ENCODE measurements at regions of chr17 and their contacts with region 1.

Region 1: GRCh38 chr17:4967539-4968165 is at the start of gene SPAG7:
- DNase-seq: peak; percentile 88 to 98 (median 93)
- ATAC-seq: peak; percentile 71
- H3K4me3 ChIP-seq: peak within 1 kb of the TSS; percentile 84
- H3K4me3 Mint-ChIP-seq: no peak within 1 kb of the TSS
- H3K27ac ChIP-seq: peak within 1 kb of the TSS; percentile 87
- H3K27ac Mint-ChIP-seq: peak within 1 kb of the TSS; percentile 69
- H3K4me1 ChIP-seq: peaks cover 38% of the 10 kb centered on the region
- H3K4me1 Mint-ChIP-seq: peaks cover 13% of the 10 kb centered on the region
- H3K27me3 ChIP-seq: no peaks in the 10 kb centered on the region
- H3K27me3 Mint-ChIP-seq: no peaks in the 10 kb centered on the region
- CTCF ChIP-seq: peak; percentile 15
- total RNA-seq, gene SPAG7: 30.2 to 30.9 TPM

Region 2: GRCh38 chr17:4789901-4790704 is 177.5 kb before region 1 on chr17:
- CTCF ChIA-PET with region 1: interaction called, 4 read pairs
- POLR2A ChIA-PET with region 1: interaction called, 5 read pairs
- intact Hi-C with region 1: loop called in 1 of 2 experiments (anchors 10 kb)
- DNase-seq: peak; percentile 61 to 92 (median 74)
- ATAC-seq: peak; percentile 85
- H3K4me3 ChIP-seq: peak overlapping the region; percentile 65
- H3K4me3 Mint-ChIP-seq: peak overlapping the region; percentile 91
- H3K27ac ChIP-seq: peak overlapping the region; percentile 58 to 74
- H3K27ac Mint-ChIP-seq: peak overlapping the region; percentile 74
- H3K4me1 ChIP-seq: peaks cover 36% of the 10 kb centered on the region
- H3K4me1 Mint-ChIP-seq: peaks cover 24% of the 10 kb centered on the region
- H3K27me3 ChIP-seq: peaks cover 29% of the 10 kb centered on the region in 2 experiments
- H3K27me3 Mint-ChIP-seq: peaks cover 45% of the 10 kb centered on the region
- CTCF ChIP-seq: peak; percentile 81

Region 3: GRCh38 chr17:4908301-4908700 is 59.4 kb before region 1 on chr17:
- CTCF ChIA-PET with region 1: interaction called, 21 read pairs
- POLR2A ChIA-PET with region 1: interaction called, 54 read pairs
- intact Hi-C with region 1: loop called (anchors 1 kb)
- DNase-seq: peak in 2 of 14 experiments; percentile 30 to 51
- ATAC-seq: no peak
- H3K4me3 ChIP-seq: no peak overlapping the region
- H3K4me3 Mint-ChIP-seq: no peak overlapping the region
- H3K27ac ChIP-seq: no peak overlapping the region
- H3K27ac Mint-ChIP-seq: no peak overlapping the region
- H3K4me1 ChIP-seq: peaks cover 24% of the 10 kb centered on the region
- H3K4me1 Mint-ChIP-seq: peaks cover 5% of the 10 kb centered on the region
- H3K27me3 ChIP-seq: no peaks in the 10 kb centered on the region
- H3K27me3 Mint-ChIP-seq: no peaks in the 10 kb centered on the region
- CTCF ChIP-seq: no peak

Region 4: GRCh38 chr17:4939796-4940624 is 27.6 kb before region 1 on chr17 and contains the starts of genes RNF167 and SLC25A11:
- CTCF ChIA-PET with region 1: interaction called, 14 read pairs
- POLR2A ChIA-PET with region 1: interaction called, 350 read pairs
- intact Hi-C with region 1: loop called (anchors 1 to 2 kb)
- DNase-seq: peak; percentile 91 to 100 (median 95)
- ATAC-seq: peak; percentile 83
- H3K4me3 ChIP-seq: peak within 1 kb of the TSS; percentile 100
- H3K4me3 Mint-ChIP-seq: peak within 1 kb of the TSS; percentile 99
- H3K27ac ChIP-seq: peak within 1 kb of the TSS; percentile 89 to 91
- H3K27ac Mint-ChIP-seq: peak within 1 kb of the TSS; percentile 90
- H3K4me1 ChIP-seq: peaks cover 66% of the 10 kb centered on the region
- H3K4me1 Mint-ChIP-seq: peaks cover 59% of the 10 kb centered on the region
- H3K27me3 ChIP-seq: no peaks in the 10 kb centered on the region
- H3K27me3 Mint-ChIP-seq: no peaks in the 10 kb centered on the region
- CTCF ChIP-seq: no peak
- total RNA-seq, gene RNF167: 59.3 to 62.8 TPM
- total RNA-seq, gene SLC25A11: 20.8 to 21.9 TPM

Region 5: DNA sequence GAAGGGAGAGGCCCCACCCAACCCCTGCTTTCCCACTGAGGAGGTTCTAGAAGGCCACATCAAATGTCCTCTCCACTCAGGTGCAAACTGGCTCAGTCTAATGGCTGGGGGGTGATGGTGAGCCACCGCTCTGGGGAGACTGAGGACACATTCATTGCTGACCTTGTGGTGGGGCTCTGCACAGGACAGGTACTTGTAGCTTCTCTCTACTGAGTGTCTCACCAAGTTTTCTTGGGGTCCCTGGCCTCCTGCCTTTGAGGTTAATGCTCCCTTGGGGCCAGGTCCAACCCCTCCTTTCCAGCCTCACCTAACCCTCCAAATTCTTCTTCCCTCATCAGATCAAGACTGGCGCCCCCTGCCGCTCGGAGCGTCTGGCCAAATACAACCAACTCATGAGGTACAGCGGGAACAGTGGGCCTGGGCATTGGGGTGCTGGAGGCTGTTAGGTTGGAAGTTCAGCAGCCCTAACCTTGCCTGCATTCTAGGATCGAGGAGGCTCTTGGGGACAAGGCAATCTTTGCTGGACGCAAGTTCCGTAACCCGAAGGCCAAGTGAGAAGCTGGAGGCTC is 11.1 kb before region 1 on chr17:
- CTCF ChIA-PET with region 1: interaction called, 3 read pairs
- POLR2A ChIA-PET with region 1: interaction called, 350 read pairs
- intact Hi-C with region 1: no loop called
- DNase-seq: peak in 12 of 14 experiments; percentile 26 to 75 (median 44)
- ATAC-seq: peak; percentile 24
- H3K4me3 ChIP-seq: no peak overlapping the region
- H3K4me3 Mint-ChIP-seq: no peak overlapping the region
- H3K27ac ChIP-seq: no peak overlapping the region
- H3K27ac Mint-ChIP-seq: no peak overlapping the region
- H3K4me1 ChIP-seq: no peaks in the 10 kb centered on the region
- H3K4me1 Mint-ChIP-seq: peaks cover 6% of the 10 kb centered on the region
- H3K27me3 ChIP-seq: no peaks in the 10 kb centered on the region
- H3K27me3 Mint-ChIP-seq: no peaks in the 10 kb centered on the region
- CTCF ChIP-seq: peak; percentile 20

Region 6: GRCh38 chr17:4986951-4987766 is 19.5 kb after region 1 on chr17 and contains the start of gene CAMTA2:
- CTCF ChIA-PET with region 1: interaction called, 12 read pairs
- POLR2A ChIA-PET with region 1: interaction called, 50 read pairs
- intact Hi-C with region 1: loop called in 1 of 2 experiments (anchors 1 kb)
- DNase-seq: peak; percentile 74 to 92 (median 86)
- ATAC-seq: peak; percentile 90
- H3K4me3 ChIP-seq: peak within 1 kb of the TSS; percentile 99
- H3K4me3 Mint-ChIP-seq: peak within 1 kb of the TSS; percentile 94
- H3K27ac ChIP-seq: peak within 1 kb of the TSS; percentile 90 to 92
- H3K27ac Mint-ChIP-seq: peak within 1 kb of the TSS; percentile 87
- H3K4me1 ChIP-seq: peaks cover 36% of the 10 kb centered on the region
- H3K4me1 Mint-ChIP-seq: peaks cover 40% of the 10 kb centered on the region
- H3K27me3 ChIP-seq: no peaks in the 10 kb centered on the region
- H3K27me3 Mint-ChIP-seq: no peaks in the 10 kb centered on the region
- CTCF ChIP-seq: peak; percentile 91
- total RNA-seq, gene CAMTA2: 41.6 to 51.3 TPM